Sigmoid colon (tissue), 7 donors: ENCODE measurements at regions of chr15 and their contacts with region 1.

Region 1: DNA sequence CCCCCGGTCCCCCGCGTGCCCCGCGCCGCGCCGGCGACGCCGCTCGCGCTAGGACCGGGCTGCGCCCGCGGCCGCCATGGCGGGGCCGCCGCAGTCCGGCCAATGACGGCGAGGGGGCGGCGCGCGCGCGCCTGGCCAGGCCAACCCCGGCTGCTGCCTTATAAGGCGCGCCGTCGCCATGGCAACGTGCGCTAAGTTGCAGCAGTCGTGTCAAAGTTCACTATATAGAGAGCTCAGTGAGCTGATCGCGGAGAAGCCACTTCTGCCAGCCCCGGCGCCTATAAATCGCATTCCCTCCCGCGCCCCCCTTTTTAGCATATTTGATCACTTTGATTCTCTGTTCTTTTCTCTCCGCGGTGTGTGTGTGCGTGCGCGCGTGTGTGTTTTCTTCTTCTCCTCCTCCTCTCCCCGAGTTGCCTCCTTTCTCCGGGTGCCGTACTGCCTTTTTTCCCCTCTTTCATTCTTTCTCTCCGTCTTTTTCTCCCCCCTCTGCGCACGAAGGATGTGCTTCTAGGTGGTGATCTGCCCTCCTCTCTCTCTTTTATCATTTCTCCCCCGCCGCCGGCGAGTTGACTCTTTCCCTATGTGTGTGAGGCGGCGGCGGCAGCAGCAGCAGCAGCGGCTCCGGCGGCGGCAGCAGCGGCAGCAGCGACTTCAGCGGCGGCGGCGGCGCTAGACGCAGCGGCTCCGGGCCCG is at the start of gene NR2F2:
- DNase-seq: peak; percentile 99
- H3K4me3 ChIP-seq: peak within 1 kb of the TSS; percentile 75 to 89 (median 85)
- H3K27ac ChIP-seq: peak within 1 kb of the TSS; percentile 93 to 97 (median 94)
- H3K4me1 ChIP-seq: peaks cover 0 to 30% (median 21%) of the 10 kb centered on the region in 4 donors
- H3K27me3 ChIP-seq: no peaks in the 10 kb centered on the region
- CTCF ChIP-seq: no peak
- EP300 ChIP-seq: peak in 1 of 4 donors; percentile 2
- POLR2A ChIP-seq: peak; percentile 94 to 95
- total RNA-seq, gene NR2F2: 24.0 to 47.9 (median 31.0) TPM

Region 2: GRCh38 chr15:94844538-94845389 is 1485.8 kb before region 1 on chr15:
- intact Hi-C with region 1: loop called (anchors 10 kb)
- DNase-seq: peak; percentile 79
- H3K4me3 ChIP-seq: peak overlapping the region; percentile 7 to 54 (median 46)
- H3K27ac ChIP-seq: peak overlapping the region; percentile 62 to 76 (median 68)
- H3K4me1 ChIP-seq: peaks cover 0 to 11% (median 0%) of the 10 kb centered on the region in 4 donors
- H3K27me3 ChIP-seq: peaks cover 0 to 3% (median 0%) of the 10 kb centered on the region in 3 donors
- CTCF ChIP-seq: no peak
- EP300 ChIP-seq: no peak
- POLR2A ChIP-seq: no peak

Region 3: DNA sequence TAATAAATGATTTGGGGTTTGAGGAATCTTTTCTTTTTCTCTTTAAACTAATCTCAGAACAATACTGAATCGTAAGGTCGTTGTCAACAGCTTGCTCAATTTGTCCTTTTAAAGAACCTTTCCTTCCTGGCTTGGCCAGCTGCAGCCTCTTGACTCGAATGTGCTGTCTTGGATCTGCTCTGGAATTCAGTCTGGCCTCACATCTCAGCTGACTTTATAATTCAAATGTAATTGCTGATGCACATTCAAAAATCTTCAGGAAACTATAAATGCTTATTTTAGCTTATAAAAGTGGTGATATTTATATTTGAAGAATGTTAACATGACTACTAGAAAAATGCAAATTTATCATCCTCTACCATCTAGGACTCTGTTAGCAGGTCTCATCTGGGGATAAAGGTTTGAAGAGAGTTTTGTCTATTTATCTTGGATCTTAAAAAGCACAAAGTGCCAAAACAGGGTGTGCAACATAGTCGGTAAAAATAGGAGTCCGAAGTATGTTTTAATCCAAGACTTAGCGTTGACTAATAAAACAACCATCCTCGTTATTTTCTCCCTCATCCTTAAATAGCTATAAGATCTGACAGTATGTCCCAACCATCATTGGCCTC is 1064.0 kb before region 1 on chr15:
- intact Hi-C with region 1: loop called (anchors 5 kb)
- DNase-seq: peak; percentile 84
- H3K4me3 ChIP-seq: no peak overlapping the region
- H3K27ac ChIP-seq: peak overlapping the region; percentile 50 to 76 (median 64)
- H3K4me1 ChIP-seq: peaks cover 0 to 30% (median 18%) of the 10 kb centered on the region in 4 donors
- H3K27me3 ChIP-seq: no peaks in the 10 kb centered on the region
- CTCF ChIP-seq: no peak
- EP300 ChIP-seq: no peak
- POLR2A ChIP-seq: no peak

Region 4: GRCh38 chr15:95590533-95591044 is 740.0 kb before region 1 on chr15:
- intact Hi-C with region 1: loop called (anchors 5 kb)
- DNase-seq: no peak
- H3K4me3 ChIP-seq: no peak overlapping the region
- H3K27ac ChIP-seq: no peak overlapping the region
- H3K4me1 ChIP-seq: peaks cover 0 to 12% (median 3%) of the 10 kb centered on the region in 4 donors
- H3K27me3 ChIP-seq: no peaks in the 10 kb centered on the region
- CTCF ChIP-seq: no peak
- EP300 ChIP-seq: peak in 3 of 4 donors; percentile 8 to 82 (median 60)
- POLR2A ChIP-seq: no peak

Region 5: DNA sequence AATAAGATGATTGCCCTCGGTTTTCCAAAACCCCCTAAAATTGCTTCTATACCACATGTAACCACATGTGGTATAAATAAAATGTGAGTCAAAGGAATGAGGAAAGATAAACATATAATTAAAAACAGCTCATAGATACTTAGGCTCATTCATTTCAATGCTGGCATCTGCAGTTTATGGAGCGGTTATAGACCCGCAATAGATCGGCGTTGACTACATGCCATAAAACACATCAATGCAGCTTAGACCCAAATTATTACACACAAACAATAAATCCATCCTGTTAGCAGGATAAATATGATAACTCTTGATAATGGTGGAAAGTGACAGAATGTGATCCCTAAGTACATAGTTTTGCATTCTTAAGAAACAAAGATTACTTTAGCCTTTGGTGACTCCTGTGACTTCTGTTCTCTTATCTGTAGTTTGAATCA is 143.7 kb after region 1 on chr15:
- intact Hi-C with region 1: no loop called
- DNase-seq: no peak
- H3K4me3 ChIP-seq: no peak overlapping the region
- H3K27ac ChIP-seq: no peak overlapping the region
- H3K4me1 ChIP-seq: no peaks in the 10 kb centered on the region
- H3K27me3 ChIP-seq: no peaks in the 10 kb centered on the region
- CTCF ChIP-seq: no peak
- EP300 ChIP-seq: no peak
- POLR2A ChIP-seq: no peak

Region 6: GRCh38 chr15:96893159-96893906 is 562.7 kb after region 1 on chr15:
- intact Hi-C with region 1: loop called (anchors 5 kb)
- DNase-seq: no peak
- H3K4me3 ChIP-seq: no peak overlapping the region
- H3K27ac ChIP-seq: no peak overlapping the region
- H3K4me1 ChIP-seq: peaks cover 0 to 7% (median 0%) of the 10 kb centered on the region in 4 donors
- H3K27me3 ChIP-seq: no peaks in the 10 kb centered on the region
- CTCF ChIP-seq: peak in 3 of 4 experiments; percentile 23 to 51 (median 25)
- EP300 ChIP-seq: no peak
- POLR2A ChIP-seq: no peak

Region 7: GRCh38 chr15:97234851-97235610 is 904.4 kb after region 1 on chr15:
- intact Hi-C with region 1: loop called (anchors 10 kb)
- DNase-seq: no peak
- H3K4me3 ChIP-seq: no peak overlapping the region
- H3K27ac ChIP-seq: no peak overlapping the region
- H3K4me1 ChIP-seq: peaks cover 0 to 8% (median 0%) of the 10 kb centered on the region in 4 donors
- H3K27me3 ChIP-seq: no peaks in the 10 kb centered on the region
- CTCF ChIP-seq: peak; percentile 49 to 91 (median 76)
- EP300 ChIP-seq: no peak
- POLR2A ChIP-seq: no peak

Region 8: GRCh38 chr15:98017150-98017964 is 1686.8 kb after region 1 on chr15:
- intact Hi-C with region 1: loop called (anchors 10 kb)
- DNase-seq: peak; percentile 68
- H3K4me3 ChIP-seq: peak overlapping the region; percentile 29 to 57 (median 50)
- H3K27ac ChIP-seq: peak overlapping the region; percentile 75 to 93 (median 88)
- H3K4me1 ChIP-seq: peaks cover 0 to 28% (median 17%) of the 10 kb centered on the region in 4 donors
- H3K27me3 ChIP-seq: no peaks in the 10 kb centered on the region
- CTCF ChIP-seq: no peak
- EP300 ChIP-seq: no peak
- POLR2A ChIP-seq: peak in 1 of 2 donors; percentile 66